ENCODE measurements at regions of chr3 and their contacts with region 1.

Region 1: DNA sequence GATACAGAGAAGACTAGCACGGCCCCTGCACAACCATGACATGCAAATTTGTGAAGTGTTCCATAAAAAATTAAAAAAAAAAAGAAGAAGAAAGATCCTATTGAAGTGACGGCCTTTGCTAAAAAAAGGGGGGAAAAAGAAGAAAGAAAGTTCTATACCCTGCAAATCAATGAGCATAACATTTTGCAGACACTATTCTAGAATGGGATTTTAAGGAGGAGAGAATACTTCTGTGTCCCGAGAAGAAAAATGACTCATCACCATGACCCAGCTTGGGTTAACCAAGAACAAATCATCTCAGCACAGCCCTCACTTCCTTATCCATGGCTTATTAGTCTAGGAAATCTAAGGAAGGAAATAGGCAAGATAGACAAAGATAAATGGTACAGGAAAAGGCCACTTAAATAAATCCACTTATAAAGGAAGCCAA is 7.4 kb upstream of the SH3BP5 start:
- DNase-seq: no peak
- ATAC-seq: peak in 3 of 4 donors; percentile 43 to 52 (median 48)
- H3K4me3 ChIP-seq: no peak overlapping the region
- H3K27ac ChIP-seq: no peak overlapping the region
- H3K4me1 ChIP-seq: peaks cover 0 to 26% (median 0%) of the 10 kb centered on the region in 12 donors
- H3K27me3 ChIP-seq: no peaks in the 10 kb centered on the region
- CTCF ChIP-seq: no peak
- POLR2A ChIP-seq: no peak

Region 2: DNA sequence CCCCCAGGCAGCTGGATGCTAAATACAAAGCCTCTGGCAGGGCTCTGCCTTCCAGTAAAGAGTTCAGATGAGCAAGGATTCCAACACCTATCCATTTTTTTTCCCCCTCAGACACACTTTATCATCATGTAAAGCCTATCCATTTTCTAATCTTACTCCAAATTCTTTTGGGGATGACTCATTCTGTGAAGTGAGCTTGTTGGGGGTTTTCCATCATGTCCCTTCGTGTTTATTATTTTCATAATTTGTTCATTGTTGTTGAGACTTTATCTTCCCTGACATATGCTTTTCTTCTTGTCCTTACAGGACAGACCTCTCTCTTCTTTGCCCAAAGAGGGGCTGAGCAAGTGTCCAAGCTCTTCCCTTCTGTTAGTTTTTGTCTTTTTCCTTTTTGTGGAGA is 27.3 kb after region 1 on chr3:
- intact Hi-C with region 1: loop called in 1 of 10 experiments (anchors 2 kb)
- DNase-seq: no peak
- ATAC-seq: no peak
- H3K4me3 ChIP-seq: no peak overlapping the region
- H3K27ac ChIP-seq: no peak overlapping the region
- H3K4me1 ChIP-seq: peaks cover 0 to 6% (median 0%) of the 10 kb centered on the region in 12 donors
- H3K27me3 ChIP-seq: no peaks in the 10 kb centered on the region
- CTCF ChIP-seq: no peak
- POLR2A ChIP-seq: no peak

Measured in heart left ventricle (tissue), 16 donors.